Gastrocnemius medialis (tissue), 4 donors: ENCODE measurements at regions of chr16 and their contacts with region 1.

Region 1: DNA sequence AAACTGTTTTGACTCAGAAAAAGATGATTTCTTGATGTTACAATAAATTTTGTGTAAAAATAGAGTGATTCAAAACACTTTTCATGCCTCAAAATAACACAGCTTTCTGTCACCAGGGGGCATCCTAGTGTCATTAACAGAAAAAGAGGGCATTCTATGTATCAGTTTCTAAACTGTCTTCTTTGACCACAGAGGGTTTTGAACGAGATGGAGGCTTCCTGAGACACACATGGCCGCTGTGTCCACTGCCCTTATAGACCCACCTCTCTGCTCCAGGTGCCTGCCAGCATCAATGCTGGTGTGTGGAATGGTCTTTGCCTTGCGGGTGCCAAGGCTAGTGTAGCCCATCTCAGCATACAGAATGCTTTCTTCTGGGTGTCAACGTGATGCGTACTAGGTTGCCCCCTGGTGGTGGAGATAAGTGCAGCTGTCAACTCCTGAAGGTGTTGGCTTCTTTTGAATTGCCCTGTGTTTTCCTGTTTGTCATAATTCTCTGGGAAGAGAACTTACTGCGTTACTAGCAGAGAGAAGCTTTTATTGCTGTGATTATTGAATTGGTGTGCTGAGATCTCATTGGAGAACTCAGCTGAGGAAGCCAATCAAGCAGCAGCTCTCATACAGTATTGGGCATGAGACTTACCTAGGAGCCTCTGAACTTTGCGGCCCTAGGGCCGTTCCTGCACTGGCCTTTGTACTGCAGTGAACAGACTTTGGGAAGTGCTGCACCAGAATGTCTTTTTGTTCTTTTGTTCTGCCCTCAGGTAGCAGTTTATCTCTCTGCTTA is 38.6 kb downstream of the USP10 start:
- DNase-seq: peak; percentile 49 to 65
- ATAC-seq: peak; percentile 64 to 79
- H3K4me3 ChIP-seq: no peak overlapping the region
- H3K27ac ChIP-seq: no peak overlapping the region
- H3K4me1 ChIP-seq: peaks cover 24 to 46% of the 10 kb centered on the region in 2 donors
- H3K27me3 ChIP-seq: no peaks in the 10 kb centered on the region
- CTCF ChIP-seq: peak; percentile 57 to 89 (median 82)
- POLR2A ChIP-seq: no peak

Region 2: DNA sequence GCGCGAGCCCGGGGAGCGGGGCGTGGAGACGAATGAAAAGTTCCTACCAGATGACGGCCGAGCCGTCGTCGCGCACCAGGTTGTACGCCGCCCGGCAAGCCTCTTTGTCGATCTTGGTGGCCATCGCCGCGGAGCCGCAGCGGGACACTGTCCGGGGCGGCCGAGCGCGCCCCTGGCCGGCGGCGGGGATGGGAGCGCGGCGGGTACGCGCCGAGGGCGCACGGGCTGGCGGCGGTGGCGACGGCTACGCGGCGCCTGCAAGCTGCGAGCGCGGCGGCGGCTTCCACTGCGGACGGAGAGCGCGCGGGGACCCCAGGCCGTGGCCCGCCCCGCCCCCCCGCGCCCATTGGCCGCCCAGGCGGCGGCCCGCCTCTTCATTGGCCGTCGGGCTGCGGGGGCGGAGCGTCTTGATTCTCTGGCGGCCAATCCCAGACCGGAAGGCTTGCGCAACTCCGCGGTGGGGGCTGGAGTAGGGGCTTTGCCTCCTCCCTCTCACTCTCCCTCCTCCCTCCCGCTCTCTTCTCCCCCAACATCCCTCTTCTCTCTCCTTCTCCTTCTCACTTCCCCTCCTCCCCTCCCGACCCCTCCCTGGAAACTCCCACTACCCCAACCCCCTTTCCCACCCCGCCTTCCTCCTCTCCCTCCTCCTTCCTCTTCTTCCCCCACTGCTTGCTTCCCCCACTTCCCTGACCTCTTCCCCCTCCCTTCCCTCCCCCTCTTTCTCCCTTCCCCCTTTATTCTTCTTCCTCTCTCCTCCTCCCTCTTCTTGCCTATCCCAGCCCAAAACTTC is 120.5 kb before region 1 on chr16 and contains the start of gene COTL1:
- in situ Hi-C with region 1: no loop called
- intact Hi-C with region 1: loop called (anchors 1 kb)
- DNase-seq: peak; percentile 84 to 89
- ATAC-seq: peak; percentile 80 to 87
- H3K4me3 ChIP-seq: peak within 1 kb of the TSS; percentile 56 to 81 (median 68)
- H3K27ac ChIP-seq: peak within 1 kb of the TSS in 3 of 4 donors; percentile 44 to 54 (median 52)
- H3K4me1 ChIP-seq: peaks cover 12 to 14% of the 10 kb centered on the region in 2 donors
- H3K27me3 ChIP-seq: peaks cover 25 to 30% (median 26%) of the 10 kb centered on the region in 3 donors
- CTCF ChIP-seq: no peak
- POLR2A ChIP-seq: peak; percentile 62 to 81
- total RNA-seq, gene COTL1: 2.8 to 8.7 (median 6.2) TPM

Region 3: GRCh38 chr16:84672276-84673202 is 65.9 kb before region 1 on chr16:
- in situ Hi-C with region 1: no loop called
- intact Hi-C with region 1: loop called (anchors 2 kb)
- DNase-seq: peak; percentile 40 to 63
- ATAC-seq: peak; percentile 78 to 93
- H3K4me3 ChIP-seq: no peak overlapping the region
- H3K27ac ChIP-seq: no peak overlapping the region
- H3K4me1 ChIP-seq: no peaks in the 10 kb centered on the region
- H3K27me3 ChIP-seq: no peaks in the 10 kb centered on the region
- CTCF ChIP-seq: peak; percentile 79 to 94 (median 90)
- POLR2A ChIP-seq: no peak

Region 4: DNA sequence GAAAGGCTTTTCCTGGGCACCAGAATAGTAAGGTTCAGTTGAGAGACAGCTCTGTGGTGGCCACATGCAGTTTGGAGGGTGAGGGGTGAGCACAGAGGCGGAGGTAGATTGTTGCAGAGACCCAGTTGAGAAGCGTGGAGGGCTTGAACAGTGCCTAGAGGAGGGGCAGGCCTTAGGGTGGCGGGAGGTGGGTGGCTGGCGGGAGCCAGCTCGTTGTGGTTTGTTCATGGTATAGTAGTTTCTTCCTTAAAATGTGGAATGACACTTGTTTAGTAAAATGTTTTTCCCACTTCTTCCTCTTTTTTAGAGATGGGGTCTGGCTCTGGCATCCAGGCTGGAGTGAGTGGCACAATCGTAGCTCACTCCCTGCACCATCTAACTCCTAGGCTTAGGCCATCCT is 24.4 kb before region 1 on chr16:
- in situ Hi-C with region 1: no loop called
- intact Hi-C with region 1: no loop called
- DNase-seq: no peak
- ATAC-seq: no peak
- H3K4me3 ChIP-seq: no peak overlapping the region
- H3K27ac ChIP-seq: no peak overlapping the region
- H3K4me1 ChIP-seq: peaks cover 43 to 46% of the 10 kb centered on the region in 2 donors
- H3K27me3 ChIP-seq: no peaks in the 10 kb centered on the region
- CTCF ChIP-seq: no peak
- POLR2A ChIP-seq: no peak

Region 5: DNA sequence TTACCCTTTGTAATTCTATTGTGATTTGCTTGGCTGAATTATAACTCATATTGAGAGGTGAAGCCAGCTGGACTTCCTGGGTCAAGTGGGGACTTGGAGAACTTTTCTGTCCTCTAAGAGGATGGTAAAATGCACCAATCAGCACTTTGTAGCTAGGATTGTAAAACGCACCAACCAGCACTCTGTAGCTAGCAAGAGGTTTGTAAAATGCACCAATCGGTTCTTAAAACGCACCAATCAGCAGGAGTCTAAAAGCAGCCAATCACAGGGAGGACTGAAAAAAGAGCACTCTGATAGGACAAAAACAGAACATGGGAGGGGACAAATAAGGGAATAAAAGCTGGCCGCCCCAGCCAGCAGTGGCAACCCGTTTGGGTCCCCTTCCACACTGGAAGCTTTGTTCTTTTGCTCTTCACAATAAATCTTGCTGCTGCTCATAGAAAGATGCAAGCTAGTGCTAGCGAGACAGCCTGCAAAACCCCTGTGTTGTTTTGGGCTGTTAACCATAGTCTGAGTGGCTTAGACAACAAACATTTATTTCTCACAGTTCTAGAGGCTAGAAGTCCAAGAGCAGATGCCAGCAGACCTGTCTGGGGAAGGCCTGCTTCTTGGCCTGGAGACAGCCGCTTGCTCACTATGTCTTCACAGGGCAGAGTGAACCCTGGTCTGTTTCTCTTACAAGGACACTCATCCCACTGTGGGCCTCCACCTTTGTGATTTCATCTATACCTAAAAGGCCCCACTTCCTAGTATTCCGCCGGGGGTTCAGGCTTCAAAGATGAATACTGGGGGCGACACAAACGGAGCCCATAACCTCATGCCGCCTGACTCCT is 42.3 kb after region 1 on chr16:
- in situ Hi-C with region 1: no loop called
- intact Hi-C with region 1: no loop called
- DNase-seq: no peak
- ATAC-seq: no peak
- H3K4me3 ChIP-seq: no peak overlapping the region
- H3K27ac ChIP-seq: no peak overlapping the region
- H3K4me1 ChIP-seq: no peaks in the 10 kb centered on the region
- H3K27me3 ChIP-seq: no peaks in the 10 kb centered on the region
- CTCF ChIP-seq: no peak
- POLR2A ChIP-seq: no peak